ENCODE measurements at regions of chr3 and their contacts with region 1.

Region 1: GRCh38 chr3:112979240-112979832 is 4.4 kb upstream of the CD200R1 start:
- DNase-seq: peak; percentile 62
- ATAC-seq: no peak; the same call in 1 of the 2 replicates
- H3K4me3 ChIP-seq: no peak overlapping the region
- H3K27ac ChIP-seq: no peak overlapping the region
- H3K4me1 ChIP-seq: peaks cover 2% of the 10 kb centered on the region
- H3K27me3 ChIP-seq: no peaks in the 10 kb centered on the region
- CTCF ChIP-seq: peak; percentile 87

Region 2: DNA sequence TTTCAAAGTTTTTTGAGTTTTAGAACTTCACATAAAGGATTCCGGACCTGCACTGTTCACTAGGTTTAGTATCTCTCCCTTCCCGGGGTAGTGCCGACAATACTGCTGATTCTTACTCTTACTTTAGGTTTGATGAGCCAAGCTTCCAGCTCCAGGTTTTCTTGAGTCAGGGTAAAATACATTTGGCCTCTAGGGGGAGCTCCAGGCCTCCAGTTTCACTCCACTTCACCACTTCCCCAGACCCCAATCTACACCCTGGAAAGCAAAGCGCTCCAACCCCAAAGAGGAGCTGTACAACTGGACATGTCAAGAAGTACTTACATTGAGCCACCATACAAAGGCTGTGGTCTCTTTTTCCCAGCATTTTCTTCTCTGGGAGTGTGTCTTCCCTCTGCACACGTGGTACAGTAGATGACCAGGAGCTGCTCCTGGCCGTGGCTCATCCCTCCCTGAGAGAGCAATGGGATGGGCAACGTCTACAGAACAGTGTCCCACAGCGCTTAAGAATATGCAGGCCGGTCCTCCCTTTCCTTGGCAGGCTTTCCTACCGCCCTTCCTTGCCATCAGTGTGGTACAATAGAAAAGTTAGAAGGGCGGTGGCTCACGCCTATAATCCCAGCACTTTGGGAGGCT is 244.5 kb before region 1 on chr3:
- CTCF ChIA-PET with region 1: interaction called, 17 read pairs
- POLR2A ChIA-PET with region 1: no interaction called
- intact Hi-C with region 1: loop called (anchors 1 kb)
- DNase-seq: peak; percentile 89
- ATAC-seq: peak; percentile 71
- H3K4me3 ChIP-seq: no peak overlapping the region
- H3K27ac ChIP-seq: no peak overlapping the region
- H3K4me1 ChIP-seq: peaks cover 33% of the 10 kb centered on the region
- H3K27me3 ChIP-seq: no peaks in the 10 kb centered on the region
- CTCF ChIP-seq: peak; percentile 92

Measured in PC-3 (cell line).